Lower lobe of right lung (tissue), 2 donors: ENCODE measurements at regions of chr4 and their contacts with region 1.

Region 1: GRCh38 chr4:97197106-97197505 is 946.2 kb downstream of the STPG2 start:
- DNase-seq: no peak
- ATAC-seq: no peak
- H3K4me3 ChIP-seq: no peak overlapping the region
- H3K27ac ChIP-seq: no peak overlapping the region
- H3K4me1 ChIP-seq: no peaks in the 10 kb centered on the region
- H3K27me3 ChIP-seq: no peaks in the 10 kb centered on the region
- CTCF ChIP-seq: no peak

Region 2: GRCh38 chr4:97073194-97073593 is 123.9 kb before region 1 on chr4:
- intact Hi-C with region 1: no loop called
- DNase-seq: no peak
- ATAC-seq: no peak
- H3K4me3 ChIP-seq: no peak overlapping the region
- H3K27ac ChIP-seq: no peak overlapping the region
- H3K4me1 ChIP-seq: no peaks in the 10 kb centered on the region
- H3K27me3 ChIP-seq: no peaks in the 10 kb centered on the region
- CTCF ChIP-seq: no peak

Region 3: GRCh38 chr4:97507587-97508245 is 310.6 kb after region 1 on chr4:
- intact Hi-C with region 1: loop called (anchors 5 kb)
- DNase-seq: no peak
- ATAC-seq: no peak
- H3K4me3 ChIP-seq: no peak overlapping the region
- H3K27ac ChIP-seq: no peak overlapping the region
- H3K4me1 ChIP-seq: no peaks in the 10 kb centered on the region
- H3K27me3 ChIP-seq: no peaks in the 10 kb centered on the region
- CTCF ChIP-seq: no peak